ENCODE measurements at regions of chr2 and their contacts with region 1.

Region 1: DNA sequence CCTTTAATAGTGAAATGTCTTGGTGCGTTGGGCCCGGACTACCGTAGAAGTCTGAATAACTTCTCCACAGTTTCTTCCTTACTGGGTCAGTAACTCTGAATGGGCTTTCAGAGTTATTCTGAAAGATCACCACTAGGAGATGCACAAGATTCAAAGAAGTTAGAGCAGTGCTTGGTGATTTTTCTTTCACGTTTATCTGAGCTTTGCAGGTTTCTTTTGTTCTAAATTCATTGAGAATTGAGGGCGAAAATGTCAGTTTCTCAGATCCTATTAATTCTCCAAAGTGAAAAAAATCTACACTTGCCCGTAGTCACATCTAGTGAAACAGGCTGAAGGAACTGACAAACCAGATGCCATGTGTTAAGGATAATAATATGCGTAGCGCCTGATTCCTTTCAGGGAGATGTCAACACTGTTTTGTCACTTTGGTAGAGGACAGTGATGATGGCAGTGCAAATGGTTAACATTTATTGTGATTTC is 70.1 kb downstream of the QPCT start:
- DNase-seq: no peak
- H3K4me3 ChIP-seq: no peak overlapping the region
- CTCF ChIP-seq: peak in 2 of 3 donors; percentile 44 to 86
- POLR2A ChIP-seq: no peak

Region 2: DNA sequence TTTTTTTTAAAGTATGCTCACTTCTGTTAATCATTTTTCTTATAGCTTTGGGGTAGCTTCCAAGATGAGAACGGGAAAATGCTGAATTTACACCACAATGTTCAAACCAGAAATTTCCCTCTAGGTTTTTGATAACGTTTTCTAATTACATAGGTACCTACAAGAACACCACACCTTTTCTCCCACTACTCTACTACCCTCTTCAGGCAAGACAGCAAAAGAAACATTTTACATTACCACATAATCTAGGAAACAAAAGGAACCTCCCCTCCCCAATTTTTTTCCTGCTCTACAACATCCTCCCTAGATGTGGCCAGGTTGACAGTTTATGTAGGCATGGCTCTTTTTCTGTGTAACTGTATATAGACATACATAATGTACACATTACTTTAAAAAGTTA is 150.7 kb before region 1 on chr2:
- intact Hi-C with region 1: no loop called
- DNase-seq: no peak
- H3K4me3 ChIP-seq: no peak overlapping the region
- CTCF ChIP-seq: no peak
- POLR2A ChIP-seq: no peak

Region 3: GRCh38 chr2:37388074-37388473 is 26.4 kb before region 1 on chr2:
- intact Hi-C with region 1: no loop called
- DNase-seq: no peak
- H3K4me3 ChIP-seq: no peak overlapping the region
- CTCF ChIP-seq: no peak
- POLR2A ChIP-seq: no peak

Region 4: GRCh38 chr2:37832590-37833197 is 418.2 kb after region 1 on chr2:
- intact Hi-C with region 1: loop called (anchors 5 kb)
- DNase-seq: peak; percentile 89 to 97
- H3K4me3 ChIP-seq: no peak overlapping the region
- CTCF ChIP-seq: peak in 1 of 3 donors; percentile 69
- POLR2A ChIP-seq: no peak